ENCODE measurements at regions of chr13 and their contacts with region 1.

Region 1: GRCh38 chr13:68257111-68257842 is 1027.1 kb upstream of the PCDH9 start:
- DNase-seq: peak; percentile 34 to 66
- H3K4me3 ChIP-seq: no peak overlapping the region
- H3K27ac ChIP-seq: no peak overlapping the region
- H3K4me1 ChIP-seq: no peaks in the 10 kb centered on the region
- H3K27me3 ChIP-seq: no peaks in the 10 kb centered on the region
- CTCF ChIP-seq: no peak

Region 2: GRCh38 chr13:67299751-67300150 is 957.5 kb before region 1 on chr13:
- CTCF ChIA-PET with region 1: no interaction called
- POLR2A ChIA-PET with region 1: no interaction called
- intact Hi-C with region 1: loop called (anchors 10 kb)
- DNase-seq: no peak
- H3K4me3 ChIP-seq: no peak overlapping the region
- H3K27ac ChIP-seq: no peak overlapping the region
- H3K4me1 ChIP-seq: no peaks in the 10 kb centered on the region
- H3K27me3 ChIP-seq: no peaks in the 10 kb centered on the region
- CTCF ChIP-seq: no peak

Region 3: DNA sequence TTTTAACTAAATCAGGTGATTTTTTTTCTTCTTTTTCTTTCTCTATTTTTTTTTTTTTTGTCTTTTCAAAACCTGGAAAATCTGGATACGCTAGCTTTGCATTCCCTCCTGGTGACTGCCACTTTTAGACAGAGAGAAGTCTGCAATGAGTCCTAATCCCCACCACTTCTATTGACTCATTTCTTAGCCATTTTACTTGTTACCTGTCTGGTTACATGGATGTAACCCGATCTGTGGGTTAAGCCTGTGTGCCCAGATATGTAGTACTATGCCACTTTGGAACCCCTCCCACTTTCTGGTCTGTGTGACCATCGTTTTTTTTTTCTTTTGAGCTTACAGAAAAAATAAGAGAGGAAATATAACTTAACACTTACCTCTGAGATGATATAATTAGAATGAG is 209.4 kb before region 1 on chr13:
- CTCF ChIA-PET with region 1: no interaction called
- POLR2A ChIA-PET with region 1: interaction called, 10 read pairs
- intact Hi-C with region 1: loop called (anchors 10 kb)
- DNase-seq: peak; percentile 35 to 52
- H3K4me3 ChIP-seq: no peak overlapping the region
- H3K27ac ChIP-seq: no peak overlapping the region
- H3K4me1 ChIP-seq: no peaks in the 10 kb centered on the region
- H3K27me3 ChIP-seq: no peaks in the 10 kb centered on the region
- CTCF ChIP-seq: no peak

Region 4: GRCh38 chr13:68588623-68589022 is 331.3 kb after region 1 on chr13:
- CTCF ChIA-PET with region 1: no interaction called
- POLR2A ChIA-PET with region 1: no interaction called
- intact Hi-C with region 1: no loop called
- DNase-seq: no peak
- H3K4me3 ChIP-seq: no peak overlapping the region
- H3K27ac ChIP-seq: no peak overlapping the region
- H3K4me1 ChIP-seq: no peaks in the 10 kb centered on the region
- H3K27me3 ChIP-seq: no peaks in the 10 kb centered on the region
- CTCF ChIP-seq: no peak